ENCODE measurements at regions of chr20 and their contacts with region 1.

Region 1: GRCh38 chr20:46324960-46325703 is 16.8 kb upstream of the CDH22 start:
- DNase-seq: peak; percentile 30 to 37
- H3K4me3 ChIP-seq: no peak overlapping the region
- H3K27ac ChIP-seq: no peak overlapping the region
- H3K4me1 ChIP-seq: peaks cover 0 to 6% (median 4%) of the 10 kb centered on the region in 4 donors
- H3K27me3 ChIP-seq: peaks cover 0 to 94% (median 8%) of the 10 kb centered on the region in 3 donors
- CTCF ChIP-seq: peak in 2 of 7 experiments; percentile 1 to 19
- EP300 ChIP-seq: no peak
- POLR2A ChIP-seq: no peak

Region 2: DNA sequence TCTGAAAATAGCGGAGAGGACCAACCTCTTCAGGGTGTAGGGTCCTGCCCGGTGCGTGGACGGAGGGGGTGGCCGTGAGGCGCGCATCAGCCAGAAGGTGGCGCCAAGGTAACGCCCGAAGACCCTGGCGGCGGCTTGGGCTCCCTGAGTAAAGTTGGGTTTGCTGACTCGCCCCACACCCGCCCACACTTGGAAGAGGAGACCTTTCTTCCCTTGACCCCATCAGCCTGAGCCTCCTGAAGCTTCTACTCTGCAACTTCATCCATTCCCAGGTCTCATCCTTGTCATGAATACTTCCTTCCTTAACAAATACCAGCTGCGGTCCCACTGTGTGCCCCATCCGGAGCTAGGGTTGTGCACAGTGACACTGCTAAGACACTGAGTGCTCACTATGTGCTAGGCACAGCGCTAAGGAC is 192.4 kb before region 1 on chr20:
- intact Hi-C with region 1: loop called (anchors 10 kb)
- DNase-seq: peak; percentile 78 to 88
- H3K4me3 ChIP-seq: no peak overlapping the region
- H3K27ac ChIP-seq: no peak overlapping the region
- H3K4me1 ChIP-seq: peaks cover 0 to 20% (median 8%) of the 10 kb centered on the region in 4 donors
- H3K27me3 ChIP-seq: peaks cover 0 to 85% (median 20%) of the 10 kb centered on the region in 3 donors
- CTCF ChIP-seq: peak in 5 of 7 experiments; percentile 59 to 85 (median 71)
- EP300 ChIP-seq: no peak
- POLR2A ChIP-seq: no peak

Region 3: DNA sequence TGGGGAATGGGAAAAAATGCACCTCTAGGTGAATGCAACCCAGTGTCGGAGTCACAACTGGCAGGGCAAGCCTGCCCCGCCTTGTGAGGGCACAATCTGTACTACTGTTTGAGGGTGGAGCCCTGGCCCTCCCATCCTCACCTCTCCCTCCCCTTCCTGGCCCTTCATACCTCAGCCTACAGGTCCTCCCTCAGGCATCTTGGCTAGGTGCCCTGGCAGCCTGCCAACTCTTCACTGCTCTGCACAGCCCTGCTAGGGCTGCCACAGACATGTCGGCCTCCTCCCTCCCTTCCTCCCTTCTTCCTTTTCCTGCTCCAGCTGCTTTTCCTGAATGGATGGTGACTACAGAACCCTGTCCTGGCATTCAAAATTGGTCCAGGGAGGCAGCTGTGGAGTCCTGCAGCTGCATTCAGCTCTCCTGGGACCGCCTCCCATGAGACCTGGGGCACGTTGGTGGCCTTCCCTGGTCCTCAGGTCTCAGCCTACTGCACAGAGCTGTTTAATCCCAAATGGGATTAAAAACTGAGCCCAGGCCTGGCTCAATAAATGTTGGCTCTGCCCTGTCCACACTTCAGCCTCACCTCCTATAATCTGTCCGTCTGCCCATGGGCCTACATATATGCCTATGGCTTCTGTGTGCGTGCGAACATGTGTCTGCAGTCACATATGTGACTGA is 69.6 kb before region 1 on chr20:
- intact Hi-C with region 1: no loop called
- DNase-seq: peak; percentile 90 to 93
- H3K4me3 ChIP-seq: no peak overlapping the region
- H3K27ac ChIP-seq: no peak overlapping the region
- H3K4me1 ChIP-seq: peaks cover 0 to 4% (median 0%) of the 10 kb centered on the region in 4 donors
- H3K27me3 ChIP-seq: peaks cover 16 to 85% (median 33%) of the 10 kb centered on the region in 3 donors
- CTCF ChIP-seq: no peak
- EP300 ChIP-seq: no peak
- POLR2A ChIP-seq: no peak

Measured in stomach (tissue), 19 donors.